HEK293T (cell line): ENCODE measurements at regions of chr22 and their contacts with region 1.

Region 1: GRCh38 chr22:37472418-37473006 is 13.7 kb downstream of the MFNG start:
- DNase-seq: peak; percentile 71

Region 2: GRCh38 chr22:37457093-37457893 is 15.2 kb before region 1 on chr22:
- CTCF ChIA-PET with region 1: interaction called, 12 read pairs
- POLR2A ChIA-PET with region 1: no interaction called
- DNase-seq: peak; percentile 93

Region 3: DNA sequence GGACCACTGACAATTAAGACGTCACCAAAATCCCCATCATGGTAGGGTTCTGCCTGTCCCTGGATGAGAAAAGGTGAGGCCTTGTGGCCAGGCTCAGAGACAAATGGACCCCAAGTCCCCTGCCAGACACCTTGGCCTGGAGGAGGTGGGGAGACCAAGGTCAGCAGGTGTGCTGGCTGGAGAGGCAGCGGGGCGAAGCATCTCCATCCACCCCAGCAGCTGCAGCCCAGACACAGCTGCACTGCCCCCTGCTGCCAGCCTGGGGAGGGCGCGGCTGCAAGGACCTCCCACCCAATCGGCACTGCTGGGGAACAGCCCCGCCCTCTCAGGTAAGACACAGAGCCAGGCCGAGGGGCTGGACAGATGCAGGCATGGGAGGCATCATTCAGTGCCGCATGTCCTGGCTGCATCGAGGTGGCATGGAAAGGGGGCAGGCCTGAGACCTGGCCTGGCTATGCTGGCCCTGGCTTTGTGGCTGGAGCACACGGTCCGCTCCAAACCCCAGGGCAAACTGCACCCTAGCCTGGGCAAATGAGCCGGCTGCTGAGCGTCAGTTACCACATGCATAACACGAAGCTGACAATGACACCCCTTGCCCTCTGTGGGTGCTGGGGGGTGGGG is 25.9 kb after region 1 on chr22:
- CTCF ChIA-PET with region 1: interaction called, 14 read pairs
- POLR2A ChIA-PET with region 1: no interaction called
- DNase-seq: peak; percentile 86